ENCODE measurements at regions of chr11 and their contacts with region 1.

Region 1: GRCh38 chr11:93225662-93226061 is 27.9 kb upstream of the SLC36A4 start:
- DNase-seq: peak in 2 of 4 experiments; percentile 9
- ATAC-seq: peak; percentile 38; the same call in 1 of the 3 replicates
- H3K4me3 ChIP-seq: no peak overlapping the region
- H3K27ac ChIP-seq: no peak overlapping the region
- H3K4me1 ChIP-seq: no peaks in the 10 kb centered on the region
- H3K27me3 ChIP-seq: no peaks in the 10 kb centered on the region
- CTCF ChIP-seq: peak in 2 of 3 experiments; percentile 21 to 52; a peak in 2 of 6 replicates
- EP300 ChIP-seq: no peak
- POLR2A ChIP-seq: no peak
- RAD21 ChIP-seq: peak; percentile 68 to 75

Region 2: GRCh38 chr11:92941676-92942571 is 283.7 kb before region 1 on chr11:
- CTCF ChIA-PET with region 1: interaction called, 6 read pairs
- POLR2A ChIA-PET with region 1: no interaction called
- in situ Hi-C with region 1: no loop called
- intact Hi-C with region 1: loop called (anchors 2 kb)
- DNase-seq: peak; percentile 31 to 45 (median 41)
- ATAC-seq: peak; percentile 70
- H3K4me3 ChIP-seq: no peak overlapping the region
- H3K27ac ChIP-seq: no peak overlapping the region
- H3K4me1 ChIP-seq: no peaks in the 10 kb centered on the region
- H3K27me3 ChIP-seq: no peaks in the 10 kb centered on the region
- CTCF ChIP-seq: peak; percentile 46 to 65 (median 55); a peak in 5 of 6 replicates
- EP300 ChIP-seq: no peak
- POLR2A ChIP-seq: no peak
- RAD21 ChIP-seq: peak; percentile 64 to 83

Measured in K562 (cell line).